Activated CD4-positive, alpha-beta memory T cell treated with anti-CD3 and anti-CD28 coated beads, Interleukin-2, amount 10 ng/mL, durations not matched to agents 7 days and 5 days (primary cell): ENCODE measurements at regions of chr12 and their contacts with region 1.

Region 1: DNA sequence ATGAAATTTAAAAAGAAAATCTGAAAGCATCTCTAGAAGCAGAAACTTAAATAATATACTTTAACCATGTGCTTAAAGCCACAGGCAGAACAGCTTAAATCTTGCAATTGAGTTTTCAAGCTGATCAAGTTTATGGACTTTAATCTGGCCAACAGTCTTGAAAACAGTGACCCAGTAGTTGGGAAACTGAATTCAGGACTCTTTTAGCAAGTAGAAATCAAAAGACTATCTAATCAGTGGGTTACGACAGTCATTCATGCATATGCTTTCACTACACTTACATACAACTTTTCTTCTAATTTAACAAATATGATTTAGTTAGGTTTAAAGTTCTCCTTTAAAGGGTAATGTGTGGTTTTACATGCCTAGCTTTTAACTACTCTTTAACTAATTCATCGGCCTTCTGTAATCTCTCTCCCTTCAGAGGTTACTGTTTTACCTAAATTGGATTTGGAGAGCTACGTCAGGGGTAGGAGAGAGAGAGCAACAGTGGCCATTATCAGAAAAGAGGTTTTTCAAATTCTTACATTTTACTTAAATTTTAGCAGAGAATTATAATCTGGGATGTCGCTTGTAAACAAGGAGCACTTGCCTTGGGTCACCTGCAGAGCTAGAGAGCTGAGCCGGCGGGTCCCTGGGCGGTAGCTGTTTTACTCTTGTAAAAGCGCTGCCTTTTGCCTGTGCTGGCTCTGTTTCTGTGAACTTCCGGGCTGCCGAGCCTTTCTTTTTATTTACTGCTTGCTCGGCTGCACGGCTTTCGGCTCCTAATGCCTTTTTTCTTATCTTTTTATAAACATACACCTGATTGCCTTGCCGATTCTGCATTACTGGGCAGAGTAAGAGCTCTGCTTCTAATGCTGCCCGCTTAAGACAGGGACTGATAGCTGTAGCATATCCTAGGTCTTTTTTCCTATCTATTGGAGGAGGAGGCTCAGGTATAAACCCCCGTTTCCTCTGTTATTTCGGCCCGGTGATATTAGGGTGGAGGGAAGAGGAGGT is 17.4 kb upstream of the LYZ start:
- DNase-seq: peak; percentile 73
- H3K4me3 Mint-ChIP-seq: peak overlapping the region; percentile 78
- H3K27ac Mint-ChIP-seq: peak overlapping the region; percentile 92
- H3K4me1 Mint-ChIP-seq: peaks cover 53% of the 10 kb centered on the region
- H3K27me3 Mint-ChIP-seq: no peaks in the 10 kb centered on the region

Region 2: GRCh38 chr12:69275471-69275891 is 55.3 kb before region 1 on chr12:
- CTCF ChIA-PET with region 1: no interaction called
- POLR2A ChIA-PET with region 1: interaction called, 12 read pairs
- DNase-seq: no peak
- H3K4me3 Mint-ChIP-seq: no peak overlapping the region
- H3K27ac Mint-ChIP-seq: peak overlapping the region; percentile 67
- H3K4me1 Mint-ChIP-seq: peaks cover 21% of the 10 kb centered on the region
- H3K27me3 Mint-ChIP-seq: no peaks in the 10 kb centered on the region

Region 3: DNA sequence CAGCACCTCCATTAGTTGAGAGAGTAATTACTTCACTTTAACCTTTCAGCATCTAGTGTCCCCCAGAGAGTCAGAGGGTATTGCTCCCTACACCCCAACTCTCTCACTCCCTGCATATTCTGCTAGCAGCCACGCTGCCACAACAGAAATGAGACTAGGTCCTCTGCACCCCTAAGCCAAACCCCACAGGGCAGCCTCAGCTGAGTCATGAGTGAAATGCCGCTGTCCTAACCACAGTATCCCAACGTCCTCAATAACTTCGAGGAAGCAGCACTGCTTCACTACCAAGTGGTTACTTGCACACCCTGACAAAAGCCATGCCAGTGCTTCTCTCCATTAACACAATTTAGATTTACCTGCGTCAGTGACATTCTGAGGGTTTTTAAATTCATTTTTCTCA is 10.6 kb after region 1 on chr12:
- CTCF ChIA-PET with region 1: interaction called, 4 read pairs
- POLR2A ChIA-PET with region 1: interaction called, 13 read pairs
- DNase-seq: no peak
- H3K4me3 Mint-ChIP-seq: no peak overlapping the region
- H3K27ac Mint-ChIP-seq: no peak overlapping the region
- H3K4me1 Mint-ChIP-seq: peaks cover 2% of the 10 kb centered on the region
- H3K27me3 Mint-ChIP-seq: peaks cover 11% of the 10 kb centered on the region

Region 4: GRCh38 chr12:69470189-69471075 is 139.7 kb after region 1 on chr12 and contains the start of gene FRS2:
- CTCF ChIA-PET with region 1: no interaction called
- POLR2A ChIA-PET with region 1: interaction called, 10 read pairs
- DNase-seq: peak; percentile 87
- H3K4me3 Mint-ChIP-seq: peak within 1 kb of the TSS; percentile 96
- H3K27ac Mint-ChIP-seq: peak within 1 kb of the TSS; percentile 90
- H3K4me1 Mint-ChIP-seq: peaks cover 32% of the 10 kb centered on the region
- H3K27me3 Mint-ChIP-seq: no peaks in the 10 kb centered on the region
- total RNA-seq, gene FRS2: 12.8 to 15.1 TPM